Vagina (tissue), 2 donors: ENCODE measurements at regions of chr19 and their contacts with region 1.

Region 1: GRCh38 chr19:32224371-32225244 is 120.8 kb upstream of the ZNF507 start:
- DNase-seq: no peak
- H3K4me3 ChIP-seq: no peak overlapping the region
- H3K27ac ChIP-seq: no peak overlapping the region
- H3K4me1 ChIP-seq: peaks cover 4% of the 10 kb centered on the region
- H3K27me3 ChIP-seq: no peaks in the 10 kb centered on the region
- CTCF ChIP-seq: peak; percentile 95 to 96 (median 96)
- POLR2A ChIP-seq: no peak

Region 2: GRCh38 chr19:30682999-30683536 is 1541.5 kb before region 1 on chr19:
- intact Hi-C with region 1: loop called (anchors 10 kb)
- DNase-seq: no peak
- H3K4me3 ChIP-seq: no peak overlapping the region
- H3K27ac ChIP-seq: no peak overlapping the region
- H3K4me1 ChIP-seq: peaks cover 11% of the 10 kb centered on the region
- H3K27me3 ChIP-seq: no peaks in the 10 kb centered on the region
- CTCF ChIP-seq: peak; percentile 60 to 92 (median 79)
- POLR2A ChIP-seq: no peak

Region 3: DNA sequence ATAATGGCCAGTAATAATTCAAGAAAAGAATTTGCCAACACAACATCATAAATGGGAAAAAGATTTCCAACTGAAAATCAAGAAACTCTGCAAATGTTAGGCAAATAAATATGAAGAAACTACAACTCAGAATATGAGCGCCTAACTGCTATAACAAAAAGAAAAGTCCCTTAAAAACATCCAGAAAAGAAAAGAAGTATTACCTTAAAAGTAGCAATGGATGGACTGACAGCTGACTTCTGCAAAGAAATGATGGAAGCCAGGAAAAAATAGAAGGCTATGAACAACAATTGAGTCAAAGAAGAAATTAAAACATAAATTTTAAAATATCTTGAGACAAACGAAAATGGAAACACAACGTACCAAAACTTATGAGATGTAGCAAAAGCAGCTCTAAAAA is 361.5 kb before region 1 on chr19:
- intact Hi-C with region 1: no loop called
- DNase-seq: no peak
- H3K4me3 ChIP-seq: no peak overlapping the region
- H3K27ac ChIP-seq: no peak overlapping the region
- H3K4me1 ChIP-seq: no peaks in the 10 kb centered on the region
- H3K27me3 ChIP-seq: no peaks in the 10 kb centered on the region
- CTCF ChIP-seq: no peak
- POLR2A ChIP-seq: no peak

Region 4: GRCh38 chr19:32146664-32147063 is 77.9 kb before region 1 on chr19:
- intact Hi-C with region 1: no loop called
- DNase-seq: no peak
- H3K4me3 ChIP-seq: no peak overlapping the region
- H3K27ac ChIP-seq: no peak overlapping the region
- H3K4me1 ChIP-seq: no peaks in the 10 kb centered on the region
- H3K27me3 ChIP-seq: no peaks in the 10 kb centered on the region
- CTCF ChIP-seq: no peak
- POLR2A ChIP-seq: no peak

Region 5: DNA sequence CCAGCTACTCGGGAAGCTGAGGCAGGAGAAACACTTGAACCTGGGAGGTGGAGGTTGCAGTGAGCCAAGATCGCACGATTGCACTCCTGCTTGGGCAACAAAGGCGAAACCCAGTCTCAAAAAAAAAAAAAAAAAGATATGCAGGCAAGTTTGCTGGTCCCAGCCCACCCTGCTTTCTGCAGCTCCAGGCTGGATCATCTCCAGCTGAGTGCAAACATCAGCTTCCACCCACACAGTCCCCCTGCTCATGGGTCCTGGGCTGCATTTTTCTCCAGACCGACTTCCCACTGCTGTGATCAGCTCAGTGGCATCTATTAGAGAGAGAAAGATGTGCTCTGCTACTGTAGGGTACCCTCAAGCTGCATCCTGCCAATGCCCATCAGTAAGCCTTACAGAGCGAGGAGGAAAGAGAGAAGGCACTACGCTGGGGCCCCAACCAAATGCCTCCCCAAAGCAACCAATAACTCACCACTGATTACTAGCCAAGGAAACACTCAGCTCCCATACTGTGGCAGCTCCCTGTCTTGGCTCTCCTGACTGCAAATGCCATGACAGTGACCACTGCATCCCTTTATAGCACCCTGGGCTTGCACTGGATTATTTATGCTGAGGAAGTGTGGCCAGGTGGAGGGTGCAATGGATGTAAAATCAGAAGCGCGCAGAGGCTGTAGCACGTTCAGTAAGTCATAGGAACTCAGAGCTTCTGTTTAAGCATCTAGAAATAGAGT is 50.1 kb before region 1 on chr19:
- intact Hi-C with region 1: no loop called
- DNase-seq: peak; percentile 40 to 52
- H3K4me3 ChIP-seq: no peak overlapping the region
- H3K27ac ChIP-seq: no peak overlapping the region
- H3K4me1 ChIP-seq: no peaks in the 10 kb centered on the region
- H3K27me3 ChIP-seq: no peaks in the 10 kb centered on the region
- CTCF ChIP-seq: no peak
- POLR2A ChIP-seq: no peak

Region 6: GRCh38 chr19:32238076-32238475 is 13.5 kb after region 1 on chr19:
- intact Hi-C with region 1: no loop called
- DNase-seq: no peak
- H3K4me3 ChIP-seq: no peak overlapping the region
- H3K27ac ChIP-seq: no peak overlapping the region
- H3K4me1 ChIP-seq: no peaks in the 10 kb centered on the region
- H3K27me3 ChIP-seq: no peaks in the 10 kb centered on the region
- CTCF ChIP-seq: no peak
- POLR2A ChIP-seq: no peak